ENCODE measurements at regions of chr3 and their contacts with region 1.

Region 1: DNA sequence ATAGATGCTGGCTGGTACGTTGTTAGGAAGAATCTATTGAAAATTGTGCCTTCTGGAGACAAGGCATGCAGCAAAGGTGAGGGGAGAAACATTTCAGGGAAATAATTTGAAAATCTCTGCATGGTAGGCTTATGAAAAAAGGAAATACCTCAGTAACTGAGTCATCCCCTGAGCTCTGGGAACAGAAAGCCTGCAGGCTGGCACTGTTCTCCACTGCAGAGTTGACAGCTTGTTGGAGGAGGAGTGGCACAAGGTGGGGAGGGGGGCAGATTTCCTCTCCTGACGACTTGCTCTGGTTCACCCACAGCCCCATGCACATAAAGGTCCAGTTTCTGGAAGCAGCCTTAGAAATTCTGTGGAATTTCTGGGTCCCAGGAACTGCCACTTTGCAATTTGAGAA is 179.4 kb downstream of the ABHD5 start:
- DNase-seq: peak; percentile 64 to 89
- H3K4me3 ChIP-seq: peak overlapping the region; percentile 32; the same call in 1 of the 2 replicates
- H3K27ac ChIP-seq: peak overlapping the region; percentile 97
- H3K4me1 ChIP-seq: peaks cover 97% of the 10 kb centered on the region
- H3K27me3 ChIP-seq: no peaks in the 10 kb centered on the region
- CTCF ChIP-seq: no peak

Region 2: GRCh38 chr3:43180027-43180426 is 690.1 kb before region 1 on chr3:
- CTCF ChIA-PET with region 1: no interaction called
- POLR2A ChIA-PET with region 1: no interaction called
- intact Hi-C with region 1: loop called (anchors 5 kb)
- DNase-seq: peak; percentile 30 to 91
- H3K4me3 ChIP-seq: no peak overlapping the region
- H3K27ac ChIP-seq: peak overlapping the region; percentile 99
- H3K4me1 ChIP-seq: peaks cover 68% of the 10 kb centered on the region
- H3K27me3 ChIP-seq: no peaks in the 10 kb centered on the region
- CTCF ChIP-seq: no peak

Region 3: GRCh38 chr3:43707998-43708397 is 162.1 kb before region 1 on chr3:
- CTCF ChIA-PET with region 1: no interaction called
- POLR2A ChIA-PET with region 1: no interaction called
- intact Hi-C with region 1: loop called (anchors 5 kb)
- DNase-seq: peak; percentile 17 to 99
- H3K4me3 ChIP-seq: no peak overlapping the region
- H3K27ac ChIP-seq: peak overlapping the region; percentile 28
- H3K4me1 ChIP-seq: peaks cover 31% of the 10 kb centered on the region
- H3K27me3 ChIP-seq: no peaks in the 10 kb centered on the region
- CTCF ChIP-seq: no peak

Region 4: GRCh38 chr3:43855674-43856299 is 14.3 kb before region 1 on chr3:
- CTCF ChIA-PET with region 1: interaction called, 3 read pairs
- POLR2A ChIA-PET with region 1: interaction called, 6 read pairs
- intact Hi-C with region 1: loop called (anchors 2 kb)
- DNase-seq: peak; percentile 64 to 69
- H3K4me3 ChIP-seq: no peak overlapping the region
- H3K27ac ChIP-seq: no peak overlapping the region
- H3K4me1 ChIP-seq: peaks cover 28% of the 10 kb centered on the region
- H3K27me3 ChIP-seq: no peaks in the 10 kb centered on the region
- CTCF ChIP-seq: peak; percentile 69

Region 5: GRCh38 chr3:43960448-43960840 is 90.3 kb after region 1 on chr3:
- CTCF ChIA-PET with region 1: no interaction called
- POLR2A ChIA-PET with region 1: no interaction called
- intact Hi-C with region 1: no loop called
- DNase-seq: no peak
- H3K4me3 ChIP-seq: no peak overlapping the region
- H3K27ac ChIP-seq: no peak overlapping the region
- H3K4me1 ChIP-seq: no peaks in the 10 kb centered on the region
- H3K27me3 ChIP-seq: no peaks in the 10 kb centered on the region
- CTCF ChIP-seq: no peak

Region 6: DNA sequence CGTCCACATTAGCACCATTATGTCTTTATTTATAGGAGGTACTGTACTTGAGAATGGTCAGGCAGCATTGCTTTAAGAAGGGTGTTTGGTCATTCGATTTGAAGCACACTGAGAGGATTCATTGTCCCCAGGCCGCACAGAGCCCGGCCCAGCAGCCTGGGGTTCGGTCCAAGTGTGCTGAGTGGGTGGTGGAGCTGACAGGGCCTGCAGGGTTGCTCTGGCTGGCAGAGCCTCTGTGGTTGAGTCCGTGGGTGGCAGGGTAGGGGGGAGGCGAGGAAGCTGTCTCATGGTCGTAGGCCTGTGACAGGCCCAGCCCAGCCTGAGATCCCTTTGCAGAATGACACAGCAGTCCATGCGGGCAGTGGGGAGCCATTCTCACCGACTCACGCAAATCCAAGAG is 143.8 kb after region 1 on chr3:
- CTCF ChIA-PET with region 1: no interaction called
- POLR2A ChIA-PET with region 1: no interaction called
- intact Hi-C with region 1: no loop called
- DNase-seq: no peak
- H3K4me3 ChIP-seq: no peak overlapping the region
- H3K27ac ChIP-seq: no peak overlapping the region
- H3K4me1 ChIP-seq: no peaks in the 10 kb centered on the region
- H3K27me3 ChIP-seq: no peaks in the 10 kb centered on the region
- CTCF ChIP-seq: no peak

Region 7: DNA sequence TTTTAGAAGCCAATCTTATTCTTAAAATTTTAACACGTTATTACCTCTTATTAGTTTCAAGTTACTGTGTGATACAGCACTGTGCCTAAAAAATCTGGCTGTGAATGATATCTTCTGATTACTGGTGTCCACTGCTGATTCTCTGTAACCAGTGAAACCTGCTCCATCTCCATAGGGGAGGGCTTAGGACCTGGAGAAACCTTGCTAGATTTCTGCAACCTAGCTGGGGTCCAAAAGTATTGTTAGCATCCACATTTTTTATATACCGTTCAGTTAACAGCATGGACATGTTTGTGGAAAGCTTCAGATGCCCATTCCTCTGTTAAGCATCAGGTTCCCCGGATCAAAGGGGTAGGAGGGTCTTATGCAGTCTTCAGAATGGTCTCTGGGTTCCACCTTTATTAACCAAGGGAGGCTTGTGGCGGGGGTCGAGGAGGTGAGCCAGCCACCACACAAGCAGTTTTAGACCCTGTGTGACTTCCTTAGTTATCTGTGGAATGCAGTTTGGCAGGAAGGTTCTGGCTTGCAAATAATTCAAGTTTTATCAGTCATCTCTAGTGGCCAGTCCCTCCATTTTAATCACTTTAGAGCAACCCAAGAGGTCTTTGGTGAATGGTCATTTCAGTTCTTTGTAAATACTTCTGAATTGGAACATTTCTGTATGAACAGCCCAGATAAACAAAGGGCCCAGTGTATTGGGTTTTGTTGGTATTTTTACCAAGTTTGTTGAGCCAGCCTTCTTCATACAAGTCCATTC is 177.9 kb after region 1 on chr3:
- CTCF ChIA-PET with region 1: no interaction called
- POLR2A ChIA-PET with region 1: no interaction called
- intact Hi-C with region 1: loop called (anchors 2 kb)
- DNase-seq: peak; percentile 61 to 91
- H3K4me3 ChIP-seq: no peak overlapping the region; the same call in 1 of the 2 replicates
- H3K27ac ChIP-seq: peak overlapping the region; percentile 67
- H3K4me1 ChIP-seq: peaks cover 48% of the 10 kb centered on the region
- H3K27me3 ChIP-seq: no peaks in the 10 kb centered on the region
- CTCF ChIP-seq: no peak